Naive thymus-derived CD8-positive, alpha-beta T cell (primary cell): ENCODE measurements at regions of chr17 and their contacts with region 1.

Region 1: GRCh38 chr17:16438557-16439302 is 23.4 kb downstream of the TRPV2 start:
- DNase-seq: peak; percentile 88 to 98 (median 96)
- ATAC-seq: peak; percentile 89 to 90
- H3K4me3 Mint-ChIP-seq: peak overlapping the region; percentile 98 to 100 (median 99)
- H3K27ac Mint-ChIP-seq: peak overlapping the region; percentile 95 to 99 (median 98)
- H3K4me1 Mint-ChIP-seq: peaks cover 39 to 60% (median 52%) of the 10 kb centered on the region in 4 donors
- H3K27me3 Mint-ChIP-seq: no peaks in the 10 kb centered on the region

Region 2: GRCh38 chr17:16428098-16428882 is 10.4 kb before region 1 on chr17:
- POLR2A ChIA-PET with region 1: interaction called, 11 read pairs
- DNase-seq: peak in 8 of 10 donors; percentile 20 to 69 (median 38)
- ATAC-seq: peak; percentile 70 to 77
- H3K4me3 Mint-ChIP-seq: no peak overlapping the region
- H3K27ac Mint-ChIP-seq: peak overlapping the region in 4 of 10 donors; percentile 20 to 56 (median 34)
- H3K4me1 Mint-ChIP-seq: peaks cover 0 to 6% (median 3%) of the 10 kb centered on the region in 4 donors
- H3K27me3 Mint-ChIP-seq: no peaks in the 10 kb centered on the region